ENCODE measurements at regions of chr3 and their contacts with region 1.

Region 1: GRCh38 chr3:129383292-129383860 is 45.1 kb downstream of the EFCAB12 start:
- DNase-seq: peak; percentile 78
- H3K4me3 ChIP-seq: no peak overlapping the region
- H3K27ac ChIP-seq: no peak overlapping the region
- H3K4me1 ChIP-seq: no peaks in the 10 kb centered on the region
- H3K27me3 ChIP-seq: no peaks in the 10 kb centered on the region
- CTCF ChIP-seq: peak; percentile 80

Region 2: GRCh38 chr3:129428376-129429079 is 45.2 kb after region 1 on chr3 and contains the start of gene EFCAB12:
- CTCF ChIA-PET with region 1: no interaction called
- POLR2A ChIA-PET with region 1: interaction called, 10 read pairs
- intact Hi-C with region 1: no loop called
- DNase-seq: peak; percentile 97
- H3K4me3 ChIP-seq: peak within 1 kb of the TSS; percentile 52
- H3K27ac ChIP-seq: peak within 1 kb of the TSS; percentile 79
- H3K4me1 ChIP-seq: peaks cover 8% of the 10 kb centered on the region
- H3K27me3 ChIP-seq: no peaks in the 10 kb centered on the region
- CTCF ChIP-seq: no peak
- total RNA-seq, gene EFCAB12: 0.71 and 1.2 TPM in 2 replicates